Activated T-helper 2 cell treated with anti-CD3 and anti-CD28 coated beads, Interferon-gamma antibody, Interleukin-2, Interleukin-4, amounts not matched to agents 10 μg/mL and 5 μg/mL and 100 μg/mL, durations not matched to agents 14 hours and 24 hours and 36 hours (primary cell): ENCODE measurements at regions of chr7 and their contacts with region 1.

Region 1: GRCh38 chr7:106793015-106793975 is 71.8 kb upstream of the PIK3CG start:
- DNase-seq: no peak
- H3K4me3 Mint-ChIP-seq: no peak overlapping the region
- H3K27ac Mint-ChIP-seq: no peak overlapping the region
- H3K4me1 Mint-ChIP-seq: no peaks in the 10 kb centered on the region
- H3K27me3 Mint-ChIP-seq: peaks cover 5% of the 10 kb centered on the region

Region 2: DNA sequence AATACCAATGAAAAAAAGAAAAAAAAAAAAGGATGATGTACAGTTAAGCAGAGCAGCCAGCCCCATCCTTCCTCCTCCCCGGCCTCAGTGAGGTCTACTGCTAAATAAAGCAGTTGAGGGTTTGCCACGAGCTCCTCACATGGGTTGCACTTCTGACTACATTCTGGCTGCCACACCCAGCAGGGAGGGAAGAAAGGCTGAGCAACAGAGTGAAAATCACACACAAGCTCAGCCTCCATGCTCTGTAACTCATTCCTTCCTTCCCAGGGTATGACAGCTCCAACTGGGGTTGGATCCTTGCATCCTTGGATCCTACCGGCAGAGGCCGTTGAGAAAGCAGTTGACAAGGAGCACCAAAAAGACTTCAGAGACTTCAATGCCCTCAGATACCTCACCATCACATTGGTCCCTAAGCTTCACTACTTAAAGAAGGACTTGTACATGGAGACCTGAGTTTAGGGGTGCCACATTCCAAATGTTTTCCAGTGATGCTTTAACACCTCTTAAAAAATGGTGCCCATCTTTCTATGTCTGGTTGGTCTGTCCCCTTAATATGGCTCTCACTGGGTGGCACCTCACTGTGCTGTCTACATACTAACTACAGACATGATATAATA is 18.8 kb after region 1 on chr7:
- intact Hi-C with region 1: no loop called
- DNase-seq: peak; percentile 8
- H3K4me3 Mint-ChIP-seq: no peak overlapping the region
- H3K27ac Mint-ChIP-seq: no peak overlapping the region
- H3K4me1 Mint-ChIP-seq: peaks cover 4% of the 10 kb centered on the region
- H3K27me3 Mint-ChIP-seq: peaks cover 9% of the 10 kb centered on the region

Region 3: DNA sequence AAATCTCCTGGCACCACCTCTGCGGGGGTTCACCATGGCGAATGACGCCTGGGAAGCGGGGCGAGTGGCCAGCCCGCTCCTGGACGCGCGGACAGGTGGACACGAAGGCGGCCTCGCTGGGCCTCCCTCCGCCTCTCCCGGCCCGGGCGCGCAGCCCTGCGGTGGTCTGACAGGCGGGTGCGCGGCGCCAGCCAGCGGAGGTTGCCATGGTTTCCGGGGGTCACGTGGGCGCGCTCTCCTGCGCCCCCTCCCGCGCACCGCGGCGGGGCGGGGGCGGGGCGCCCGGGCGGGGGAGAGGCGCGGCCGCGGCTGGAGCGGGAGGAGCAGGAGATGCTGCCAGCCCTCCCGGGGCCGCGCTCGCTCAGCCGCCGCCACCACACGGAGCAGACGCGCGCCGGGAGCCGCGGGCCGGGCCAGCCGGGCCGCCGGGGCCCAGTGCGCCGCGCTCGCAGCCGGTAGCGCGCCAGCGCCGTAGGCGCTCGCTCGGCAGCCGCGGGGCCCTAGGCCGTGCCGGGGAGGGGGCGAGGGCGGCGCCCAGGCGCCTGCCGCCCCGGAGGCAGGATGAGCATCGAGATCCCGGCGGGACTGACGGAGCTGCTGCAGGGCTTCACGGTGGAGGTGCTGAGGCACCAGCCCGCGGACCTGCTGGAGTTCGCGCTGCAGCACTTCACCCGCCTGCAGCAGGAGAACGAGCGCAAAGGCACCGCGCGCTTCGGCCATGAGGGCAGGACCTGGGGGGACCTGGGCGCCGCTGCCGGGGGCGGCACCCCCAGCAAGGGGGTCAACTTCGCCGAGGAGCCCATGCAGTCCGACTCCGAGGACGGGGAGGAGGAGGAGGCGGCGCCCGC is 251.3 kb after region 1 on chr7 and contains the start of gene PRKAR2B:
- intact Hi-C with region 1: loop called (anchors 10 kb)
- DNase-seq: peak; percentile 57
- H3K4me3 Mint-ChIP-seq: peak within 1 kb of the TSS; percentile 86
- H3K27ac Mint-ChIP-seq: peak within 1 kb of the TSS; percentile 51
- H3K4me1 Mint-ChIP-seq: peaks cover 10% of the 10 kb centered on the region
- H3K27me3 Mint-ChIP-seq: peaks cover 63% of the 10 kb centered on the region
- total RNA-seq, gene PRKAR2B: 0.14 and 0.37 TPM in 2 replicates

Region 4: DNA sequence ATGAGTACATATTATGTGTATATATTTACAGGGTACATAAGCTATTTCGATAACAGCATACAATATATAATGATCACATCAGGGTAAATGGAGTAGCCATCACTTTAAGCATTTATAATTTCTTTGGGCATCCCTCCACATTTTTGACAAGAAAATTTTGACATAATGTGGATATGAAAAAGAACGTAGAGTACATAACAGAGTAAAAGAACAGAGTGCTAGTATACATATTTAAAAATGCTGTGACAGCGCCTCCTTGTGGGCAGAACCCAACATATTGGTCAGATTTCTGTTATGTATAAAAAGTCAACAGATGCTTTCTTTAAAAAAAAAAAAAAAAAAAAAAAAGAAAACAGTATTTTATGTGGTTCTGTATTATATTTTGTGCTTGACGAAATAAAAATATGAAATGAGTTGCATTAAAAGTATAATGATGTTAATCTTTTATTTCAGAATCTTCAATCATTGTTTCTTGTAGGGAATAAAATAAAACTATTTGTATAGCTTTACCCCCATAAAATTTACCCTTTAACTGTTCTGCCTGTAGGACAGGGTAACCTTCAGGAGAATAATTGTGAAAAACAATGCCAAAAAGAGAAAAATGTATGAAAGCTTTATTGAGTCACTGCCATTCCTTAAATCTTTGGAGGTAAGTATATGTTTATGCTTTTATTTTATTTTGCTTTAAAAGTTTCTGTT is 357.2 kb after region 1 on chr7:
- intact Hi-C with region 1: loop called (anchors 1 kb)
- DNase-seq: peak; percentile 44
- H3K4me3 Mint-ChIP-seq: no peak overlapping the region
- H3K27ac Mint-ChIP-seq: no peak overlapping the region
- H3K4me1 Mint-ChIP-seq: no peaks in the 10 kb centered on the region
- H3K27me3 Mint-ChIP-seq: peaks cover 9% of the 10 kb centered on the region